ENCODE measurements at regions of chr10 and their contacts with region 1.

Region 1: GRCh38 chr10:97292097-97292862 is at the start of gene ARHGAP19:
- DNase-seq: peak; percentile 99
- H3K4me3 ChIP-seq: peak within 1 kb of the TSS; percentile 61 to 89 (median 80)
- H3K27ac ChIP-seq: peak within 1 kb of the TSS; percentile 88 to 97 (median 94)
- H3K4me1 ChIP-seq: peaks cover 0 to 14% (median 5%) of the 10 kb centered on the region in 4 donors
- H3K27me3 ChIP-seq: no peaks in the 10 kb centered on the region
- CTCF ChIP-seq: no peak
- EP300 ChIP-seq: no peak
- POLR2A ChIP-seq: peak; percentile 18 to 71
- total RNA-seq, gene ARHGAP19: 4.2 to 9.1 (median 7.3) TPM

Region 2: GRCh38 chr10:97069576-97070362 is 222.5 kb before region 1 on chr10:
- intact Hi-C with region 1: no loop called
- DNase-seq: no peak
- H3K4me3 ChIP-seq: no peak overlapping the region
- H3K27ac ChIP-seq: no peak overlapping the region
- H3K4me1 ChIP-seq: no peaks in the 10 kb centered on the region
- H3K27me3 ChIP-seq: peaks cover 0 to 25% (median 0%) of the 10 kb centered on the region in 3 donors
- CTCF ChIP-seq: no peak
- EP300 ChIP-seq: no peak
- POLR2A ChIP-seq: no peak

Region 3: GRCh38 chr10:97157578-97158095 is 134.6 kb before region 1 on chr10:
- intact Hi-C with region 1: no loop called
- DNase-seq: no peak
- H3K4me3 ChIP-seq: no peak overlapping the region
- H3K27ac ChIP-seq: no peak overlapping the region
- H3K4me1 ChIP-seq: no peaks in the 10 kb centered on the region
- H3K27me3 ChIP-seq: no peaks in the 10 kb centered on the region
- CTCF ChIP-seq: no peak
- EP300 ChIP-seq: no peak
- POLR2A ChIP-seq: no peak

Region 4: GRCh38 chr10:97318772-97319651 is 26.7 kb after region 1 on chr10 and contains the start of gene FRAT1:
- intact Hi-C with region 1: loop called (anchors 2 kb)
- DNase-seq: peak; percentile 94
- H3K4me3 ChIP-seq: peak within 1 kb of the TSS; percentile 55 to 97 (median 82)
- H3K27ac ChIP-seq: peak within 1 kb of the TSS; percentile 90 to 97 (median 92)
- H3K4me1 ChIP-seq: peaks cover 0 to 33% (median 20%) of the 10 kb centered on the region in 4 donors
- H3K27me3 ChIP-seq: no peaks in the 10 kb centered on the region
- CTCF ChIP-seq: no peak
- EP300 ChIP-seq: no peak
- POLR2A ChIP-seq: peak; percentile 33 to 41
- total RNA-seq, gene FRAT1: 4.1 to 7.1 (median 5.1) TPM